ENCODE measurements at regions of chr11 and their contacts with region 1.

Region 1: DNA sequence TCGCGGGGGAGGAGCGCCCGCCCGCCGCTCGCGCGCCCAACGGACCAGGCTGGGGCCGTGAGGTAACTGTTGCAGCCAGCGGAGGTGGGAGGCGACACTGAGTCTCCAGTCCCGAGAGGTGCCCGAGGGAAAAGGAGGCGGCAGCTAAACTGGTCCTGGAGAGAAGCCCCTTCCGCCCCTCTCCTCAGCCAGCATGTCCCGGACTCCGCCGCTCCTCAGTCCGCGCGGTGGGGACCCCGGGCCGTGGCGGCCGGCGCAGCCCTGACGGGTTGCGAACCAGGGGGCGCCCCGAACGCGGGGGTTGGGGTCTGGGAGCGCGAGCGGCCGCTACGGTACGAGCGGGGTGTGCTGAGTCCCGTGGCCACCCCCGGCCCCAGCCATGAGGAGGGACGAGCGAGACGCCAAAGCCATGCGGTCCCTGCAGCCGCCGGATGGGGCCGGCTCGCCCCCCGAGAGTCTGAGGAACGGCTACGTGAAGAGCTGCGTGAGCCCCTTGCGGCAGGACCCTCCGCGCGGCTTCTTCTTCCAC is at the start of gene PDE3B:
- DNase-seq: peak; percentile 88
- ATAC-seq: peak; percentile 76
- H3K4me3 Mint-ChIP-seq: peak within 1 kb of the TSS; percentile 75
- H3K27ac Mint-ChIP-seq: peak within 1 kb of the TSS; percentile 89
- H3K4me1 Mint-ChIP-seq: peaks cover 46% of the 10 kb centered on the region
- H3K27me3 Mint-ChIP-seq: no peaks in the 10 kb centered on the region
- total RNA-seq, gene PDE3B: 24.7 to 25.8 TPM

Region 2: GRCh38 chr11:14455648-14456430 is 187.9 kb before region 1 on chr11:
- CTCF ChIA-PET with region 1: no interaction called
- POLR2A ChIA-PET with region 1: no interaction called
- intact Hi-C with region 1: no loop called
- DNase-seq: no peak
- ATAC-seq: no peak
- H3K4me3 Mint-ChIP-seq: no peak overlapping the region
- H3K27ac Mint-ChIP-seq: no peak overlapping the region
- H3K4me1 Mint-ChIP-seq: no peaks in the 10 kb centered on the region
- H3K27me3 Mint-ChIP-seq: no peaks in the 10 kb centered on the region

Region 3: DNA sequence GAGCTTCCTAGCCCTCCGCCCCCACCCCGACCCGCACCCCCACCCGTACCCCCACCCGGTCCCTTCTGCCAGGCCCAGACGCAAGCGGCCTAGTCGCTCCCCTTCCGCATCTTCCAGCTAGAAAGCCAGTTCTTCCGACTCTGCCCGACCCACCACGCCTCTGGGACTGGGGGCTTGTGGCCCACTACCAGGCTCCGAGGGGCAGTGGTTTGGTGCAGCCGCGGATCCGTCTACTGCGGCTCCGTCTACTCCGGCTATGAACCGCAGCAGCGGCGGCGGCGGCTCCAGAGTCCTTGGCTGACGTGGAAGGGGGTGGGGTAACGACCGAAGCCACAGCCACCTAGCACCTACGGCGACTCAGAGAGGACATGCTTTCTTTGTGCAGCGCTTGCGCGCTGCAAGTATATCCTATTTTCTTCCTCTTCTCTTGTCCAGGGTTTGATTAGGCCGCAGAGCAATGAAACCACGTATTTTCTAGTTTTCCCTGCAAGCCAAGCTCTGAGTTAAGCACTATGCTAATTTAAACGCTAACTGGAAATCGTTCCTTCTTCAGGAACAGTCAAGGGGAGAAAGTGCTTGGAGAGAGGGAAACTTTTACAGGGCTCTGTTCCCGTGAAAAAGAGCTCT is 144.1 kb before region 1 on chr11 and contains the start of gene COPB1:
- CTCF ChIA-PET with region 1: interaction called, 4 read pairs
- POLR2A ChIA-PET with region 1: interaction called, 3 read pairs
- intact Hi-C with region 1: loop called in 1 of 2 experiments (anchors 1 kb)
- DNase-seq: peak; percentile 96
- ATAC-seq: peak; percentile 92
- H3K4me3 Mint-ChIP-seq: peak within 1 kb of the TSS; percentile 87
- H3K27ac Mint-ChIP-seq: peak within 1 kb of the TSS; percentile 95
- H3K4me1 Mint-ChIP-seq: peaks cover 35% of the 10 kb centered on the region
- H3K27me3 Mint-ChIP-seq: no peaks in the 10 kb centered on the region
- total RNA-seq, gene COPB1: 102 to 106 TPM

Region 4: DNA sequence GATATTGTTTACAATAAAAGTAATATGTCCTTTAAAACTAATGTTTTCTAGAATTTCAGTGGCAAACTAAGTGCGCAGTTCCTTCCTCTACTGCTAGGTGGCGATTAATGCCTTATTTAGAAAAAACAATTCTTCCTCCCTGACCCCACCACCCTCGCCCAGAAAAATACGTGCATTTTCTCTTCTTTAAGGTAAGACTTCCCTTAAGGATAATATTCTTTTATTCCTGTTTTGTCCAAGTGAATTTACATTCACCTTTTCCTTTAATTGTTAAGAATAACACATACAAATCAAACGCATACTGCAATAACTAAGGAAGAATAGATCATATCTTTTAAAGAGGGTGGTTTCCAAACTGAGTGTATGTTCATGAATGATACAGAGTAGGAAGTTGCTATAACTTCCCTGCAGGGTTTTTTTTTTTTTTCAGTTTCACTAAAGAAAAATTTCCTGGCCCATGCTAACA is 106.6 kb before region 1 on chr11:
- CTCF ChIA-PET with region 1: interaction called, 11 read pairs
- POLR2A ChIA-PET with region 1: interaction called, 6 read pairs
- intact Hi-C with region 1: loop called (anchors 1 to 2 kb)
- DNase-seq: peak; percentile 59
- ATAC-seq: peak; percentile 90
- H3K4me3 Mint-ChIP-seq: peak overlapping the region; percentile 59
- H3K27ac Mint-ChIP-seq: peak overlapping the region; percentile 87
- H3K4me1 Mint-ChIP-seq: peaks cover 22% of the 10 kb centered on the region
- H3K27me3 Mint-ChIP-seq: no peaks in the 10 kb centered on the region

Region 5: GRCh38 chr11:14578541-14578956 is 65.2 kb before region 1 on chr11:
- CTCF ChIA-PET with region 1: interaction called, 6 read pairs
- POLR2A ChIA-PET with region 1: interaction called, 6 read pairs
- intact Hi-C with region 1: loop called (anchors 2 to 5 kb)
- DNase-seq: peak; percentile 58
- ATAC-seq: peak; percentile 89
- H3K4me3 Mint-ChIP-seq: peak overlapping the region; percentile 0
- H3K27ac Mint-ChIP-seq: peak overlapping the region; percentile 74
- H3K4me1 Mint-ChIP-seq: peaks cover 49% of the 10 kb centered on the region
- H3K27me3 Mint-ChIP-seq: no peaks in the 10 kb centered on the region

Region 6: GRCh38 chr11:14698771-14699170 is 55.0 kb after region 1 on chr11:
- CTCF ChIA-PET with region 1: interaction called, 3 read pairs
- POLR2A ChIA-PET with region 1: no interaction called
- intact Hi-C with region 1: loop called in 1 of 2 experiments (anchors 5 kb)
- DNase-seq: no peak
- ATAC-seq: peak; percentile 19
- H3K4me3 Mint-ChIP-seq: no peak overlapping the region
- H3K27ac Mint-ChIP-seq: no peak overlapping the region
- H3K4me1 Mint-ChIP-seq: peaks cover 39% of the 10 kb centered on the region
- H3K27me3 Mint-ChIP-seq: no peaks in the 10 kb centered on the region

Region 7: GRCh38 chr11:14892036-14892567 is 248.3 kb after region 1 on chr11 and contains the start of gene CYP2R1:
- CTCF ChIA-PET with region 1: interaction called, 3 read pairs
- POLR2A ChIA-PET with region 1: interaction called, 4 read pairs
- intact Hi-C with region 1: loop called (anchors 1 kb)
- DNase-seq: peak; percentile 94
- ATAC-seq: peak; percentile 84
- H3K4me3 Mint-ChIP-seq: peak within 1 kb of the TSS; percentile 81
- H3K27ac Mint-ChIP-seq: peak within 1 kb of the TSS; percentile 96
- H3K4me1 Mint-ChIP-seq: peaks cover 52% of the 10 kb centered on the region
- H3K27me3 Mint-ChIP-seq: peaks cover 2% of the 10 kb centered on the region
- total RNA-seq, gene CYP2R1: 13.1 to 14.8 TPM

Region 8: DNA sequence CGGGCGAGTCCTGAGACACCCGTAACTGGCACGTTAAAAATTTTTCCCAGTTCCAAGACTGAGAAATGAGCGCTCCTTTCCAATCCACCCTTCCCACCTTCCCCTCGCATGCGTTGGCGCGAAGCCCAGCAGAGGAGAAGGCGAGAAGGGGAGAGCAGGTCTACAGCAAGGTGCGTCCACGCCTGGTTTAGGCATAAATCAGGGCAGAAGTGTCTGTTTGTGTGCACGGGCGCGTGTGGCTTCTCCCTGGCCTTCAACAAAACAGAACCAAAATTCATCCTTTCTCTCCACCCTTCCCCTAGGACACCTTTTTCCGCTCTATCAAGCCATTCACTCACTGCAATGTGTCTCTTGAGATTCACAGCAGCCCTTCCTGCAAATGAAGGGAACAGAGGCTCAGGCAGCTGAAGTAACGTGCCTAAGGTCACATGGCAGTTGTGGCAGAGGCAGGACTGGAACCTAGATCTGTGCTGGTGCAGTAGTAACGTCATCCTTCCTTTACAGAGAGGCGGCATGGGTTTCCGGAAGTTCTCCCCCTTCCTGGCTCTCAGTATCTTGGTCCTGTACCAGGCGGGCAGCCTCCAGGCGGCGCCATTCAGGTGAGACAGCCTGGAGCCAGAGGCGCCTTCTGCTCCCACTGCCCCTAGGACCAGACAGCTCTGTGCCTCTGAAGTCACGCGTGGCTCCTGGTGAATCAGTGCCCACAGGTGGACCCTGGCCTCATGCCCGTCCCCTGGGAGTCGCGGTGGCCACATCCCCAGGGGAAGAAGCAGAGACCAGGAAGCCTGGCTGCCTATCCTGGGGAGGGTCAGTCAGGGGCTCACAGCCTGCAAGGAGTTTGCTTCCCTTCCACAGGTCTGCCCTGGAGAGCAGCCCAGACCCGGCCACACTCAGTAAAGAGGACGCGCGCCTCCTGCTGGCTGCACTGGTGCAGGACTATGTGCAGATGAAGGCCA is 430.7 kb after region 1 on chr11:
- CTCF ChIA-PET with region 1: no interaction called
- POLR2A ChIA-PET with region 1: no interaction called
- intact Hi-C with region 1: loop called in 1 of 2 experiments (anchors 5 kb)
- DNase-seq: peak; percentile 95
- ATAC-seq: peak; percentile 88
- H3K4me3 Mint-ChIP-seq: peak overlapping the region; percentile 80
- H3K27ac Mint-ChIP-seq: peak overlapping the region; percentile 87
- H3K4me1 Mint-ChIP-seq: peaks cover 18% of the 10 kb centered on the region
- H3K27me3 Mint-ChIP-seq: peaks cover 11% of the 10 kb centered on the region

Measured in activated CD4-positive, alpha-beta T cell treated with anti-CD3 and anti-CD28 coated beads for 36 hours (primary cell).